AG04449 (cell line): ENCODE measurements at regions of chr12 and their contacts with region 1.

Region 1: DNA sequence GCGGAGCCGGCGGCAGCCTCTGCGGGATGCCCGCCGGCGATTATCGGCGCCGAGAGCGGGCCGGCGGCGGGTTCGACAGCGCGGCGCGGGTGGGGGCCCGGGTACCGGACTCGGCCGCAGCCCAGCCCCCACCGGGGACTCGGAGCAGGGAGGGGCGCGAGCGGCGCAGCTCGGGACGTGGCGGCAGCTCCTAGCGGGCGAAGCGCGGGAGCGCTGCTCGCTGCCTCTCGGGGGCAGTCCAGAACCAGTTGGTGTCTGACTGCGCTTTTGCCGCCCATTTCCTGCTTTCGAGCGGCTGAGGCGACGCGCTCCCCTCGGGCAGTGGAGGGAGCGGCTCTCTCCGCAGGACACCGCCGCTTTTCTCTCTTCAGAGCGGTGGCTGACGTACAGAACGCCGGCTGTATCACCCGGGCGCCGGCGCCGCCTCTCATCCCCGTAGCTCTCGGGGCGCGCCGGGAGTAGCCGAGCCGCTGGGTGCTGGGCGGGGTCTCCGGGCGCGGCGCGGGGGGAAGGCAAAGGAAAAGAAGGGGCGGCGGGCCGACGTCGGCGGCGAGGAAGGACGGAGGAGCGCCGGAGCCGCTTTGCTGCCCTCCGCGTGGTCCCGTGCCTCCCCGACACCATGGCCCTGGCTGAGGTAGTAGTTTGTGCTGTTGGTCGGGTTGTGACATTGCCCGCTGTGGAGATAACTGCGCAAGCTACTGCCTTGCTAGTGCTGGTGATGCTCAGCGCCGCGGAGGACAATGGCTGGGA is 136.6 kb downstream of the MON2 start:
- DNase-seq: no peak
- H3K4me3 ChIP-seq: peak overlapping the region; percentile 90
- CTCF ChIP-seq: peak; percentile 73

Region 2: GRCh38 chr12:62703011-62703380 is 99.8 kb after region 1 on chr12:
- CTCF ChIA-PET with region 1: no interaction called
- POLR2A ChIA-PET with region 1: interaction called, 11 read pairs
- DNase-seq: no peak
- H3K4me3 ChIP-seq: no peak overlapping the region
- CTCF ChIP-seq: no peak

Region 3: GRCh38 chr12:62731055-62731820 is 128.0 kb after region 1 on chr12:
- CTCF ChIA-PET with region 1: interaction called, 5 read pairs
- POLR2A ChIA-PET with region 1: interaction called, 14 read pairs
- DNase-seq: no peak
- H3K4me3 ChIP-seq: no peak overlapping the region
- CTCF ChIP-seq: no peak

Region 4: GRCh38 chr12:62785941-62786559 is 182.8 kb after region 1 on chr12:
- CTCF ChIA-PET with region 1: interaction called, 7 read pairs
- POLR2A ChIA-PET with region 1: interaction called, 19 read pairs
- DNase-seq: peak; percentile 73
- H3K4me3 ChIP-seq: no peak overlapping the region
- CTCF ChIP-seq: no peak